ENCODE measurements at regions of chr1 and their contacts with region 1.

Region 1: DNA sequence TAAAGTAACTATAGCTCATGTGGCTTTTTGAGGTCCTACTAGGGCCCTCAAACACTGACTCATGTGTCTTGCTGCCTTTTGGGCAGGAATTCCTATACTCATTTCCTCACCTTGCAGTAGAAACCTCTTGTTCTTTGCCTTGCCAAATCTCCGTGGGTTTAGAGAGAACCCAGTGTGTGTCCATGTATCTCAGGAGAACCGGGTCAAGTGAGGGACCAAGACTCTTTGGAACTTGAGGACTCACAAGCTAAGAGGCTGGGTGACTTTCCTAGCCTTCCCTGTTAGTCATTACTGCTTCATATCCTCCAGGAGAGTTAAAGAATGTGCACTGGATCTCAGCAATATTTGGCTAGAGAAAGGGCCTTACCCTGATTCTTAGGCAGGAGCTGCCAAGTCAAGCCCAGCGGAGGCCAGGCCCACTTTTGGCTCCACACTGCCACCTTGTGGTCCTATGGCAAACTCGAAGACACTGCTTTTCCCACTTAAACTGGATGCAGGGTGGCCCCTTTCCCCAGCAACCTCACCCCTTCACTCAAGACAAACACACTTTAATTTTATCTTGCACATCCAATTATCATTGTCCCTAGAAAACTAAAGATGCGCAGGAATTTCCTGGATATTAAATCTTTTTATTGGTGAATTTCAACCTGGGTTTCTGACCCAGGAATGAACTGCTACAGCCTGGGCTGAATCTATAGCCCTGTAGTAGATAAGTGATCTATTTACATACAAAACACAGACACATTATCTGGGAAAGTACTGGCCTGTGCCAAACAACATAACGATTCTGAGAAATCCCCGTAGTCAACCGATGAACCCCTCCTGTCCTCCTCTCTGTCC is 10.6 kb downstream of the AVPR1B start:
- DNase-seq: peak; percentile 96
- H3K4me3 Mint-ChIP-seq: no peak overlapping the region
- H3K27ac Mint-ChIP-seq: no peak overlapping the region
- H3K4me1 Mint-ChIP-seq: peaks cover 9% of the 10 kb centered on the region
- H3K27me3 Mint-ChIP-seq: peaks cover 5% of the 10 kb centered on the region
- CTCF ChIP-seq: peak; percentile 99

Region 2: DNA sequence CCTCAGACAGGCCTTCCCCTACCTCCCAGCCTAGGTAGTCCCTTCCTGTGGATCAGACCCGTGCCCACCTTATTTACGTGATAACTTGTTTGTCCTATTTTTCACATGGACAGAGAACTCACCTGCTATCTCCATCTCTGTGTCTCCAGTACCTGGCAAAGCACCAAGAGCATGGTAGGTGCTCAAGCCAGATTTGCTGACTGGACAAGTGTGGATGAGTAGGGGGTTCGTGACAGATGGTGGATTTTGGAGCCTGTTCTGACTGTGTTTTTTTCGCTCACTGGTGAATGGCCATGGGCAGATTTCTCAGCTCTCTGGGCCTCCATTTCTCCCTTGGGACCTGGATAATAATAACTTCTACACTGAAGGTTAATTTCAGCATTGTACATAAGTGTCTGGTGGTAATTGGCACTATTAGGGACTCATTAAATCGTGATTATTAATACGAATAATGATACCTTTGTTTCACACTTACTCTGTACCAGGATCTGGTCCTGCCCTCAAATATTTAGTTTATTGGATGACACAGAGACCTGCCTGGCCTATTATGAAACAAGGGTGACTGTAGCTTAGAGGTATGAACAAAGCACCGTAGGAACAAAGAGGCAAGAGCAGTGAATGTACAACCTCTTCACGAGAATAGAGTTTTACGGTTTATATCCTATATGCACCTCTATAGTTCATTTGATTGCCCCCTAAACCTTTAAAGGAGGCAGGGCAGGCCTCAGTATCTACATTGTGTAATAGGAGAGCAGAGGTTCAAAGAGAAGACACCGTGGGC is 138.8 kb before region 1 on chr1:
- CTCF ChIA-PET with region 1: interaction called, 15 read pairs
- POLR2A ChIA-PET with region 1: interaction called, 3 read pairs
- intact Hi-C with region 1: no loop called
- DNase-seq: peak; percentile 67
- H3K4me3 Mint-ChIP-seq: no peak overlapping the region
- H3K27ac Mint-ChIP-seq: no peak overlapping the region
- H3K4me1 Mint-ChIP-seq: peaks cover 29% of the 10 kb centered on the region
- H3K27me3 Mint-ChIP-seq: peaks cover 5% of the 10 kb centered on the region
- CTCF ChIP-seq: no peak

Region 3: GRCh38 chr1:205994346-205994745 is 112.2 kb before region 1 on chr1:
- CTCF ChIA-PET with region 1: interaction called, 56 read pairs
- POLR2A ChIA-PET with region 1: interaction called, 3 read pairs
- intact Hi-C with region 1: no loop called
- DNase-seq: no peak
- H3K4me3 Mint-ChIP-seq: no peak overlapping the region
- H3K27ac Mint-ChIP-seq: no peak overlapping the region
- H3K4me1 Mint-ChIP-seq: peaks cover 8% of the 10 kb centered on the region
- H3K27me3 Mint-ChIP-seq: no peaks in the 10 kb centered on the region
- CTCF ChIP-seq: no peak

Region 4: GRCh38 chr1:206030714-206031113 is 75.8 kb before region 1 on chr1:
- CTCF ChIA-PET with region 1: interaction called, 244 read pairs
- POLR2A ChIA-PET with region 1: interaction called, 68 read pairs
- intact Hi-C with region 1: loop called (anchors 1 kb)
- DNase-seq: peak; percentile 95
- H3K4me3 Mint-ChIP-seq: no peak overlapping the region
- H3K27ac Mint-ChIP-seq: no peak overlapping the region
- H3K4me1 Mint-ChIP-seq: peaks cover 32% of the 10 kb centered on the region
- H3K27me3 Mint-ChIP-seq: peaks cover 11% of the 10 kb centered on the region
- CTCF ChIP-seq: peak; percentile 95

Region 5: GRCh38 chr1:206080026-206080820 is 26.3 kb before region 1 on chr1:
- CTCF ChIA-PET with region 1: interaction called, 15 read pairs
- POLR2A ChIA-PET with region 1: interaction called, 3 read pairs
- intact Hi-C with region 1: no loop called
- DNase-seq: no peak
- H3K4me3 Mint-ChIP-seq: no peak overlapping the region
- H3K27ac Mint-ChIP-seq: no peak overlapping the region
- H3K4me1 Mint-ChIP-seq: peaks cover 5% of the 10 kb centered on the region
- H3K27me3 Mint-ChIP-seq: peaks cover 6% of the 10 kb centered on the region
- CTCF ChIP-seq: no peak

Region 6: DNA sequence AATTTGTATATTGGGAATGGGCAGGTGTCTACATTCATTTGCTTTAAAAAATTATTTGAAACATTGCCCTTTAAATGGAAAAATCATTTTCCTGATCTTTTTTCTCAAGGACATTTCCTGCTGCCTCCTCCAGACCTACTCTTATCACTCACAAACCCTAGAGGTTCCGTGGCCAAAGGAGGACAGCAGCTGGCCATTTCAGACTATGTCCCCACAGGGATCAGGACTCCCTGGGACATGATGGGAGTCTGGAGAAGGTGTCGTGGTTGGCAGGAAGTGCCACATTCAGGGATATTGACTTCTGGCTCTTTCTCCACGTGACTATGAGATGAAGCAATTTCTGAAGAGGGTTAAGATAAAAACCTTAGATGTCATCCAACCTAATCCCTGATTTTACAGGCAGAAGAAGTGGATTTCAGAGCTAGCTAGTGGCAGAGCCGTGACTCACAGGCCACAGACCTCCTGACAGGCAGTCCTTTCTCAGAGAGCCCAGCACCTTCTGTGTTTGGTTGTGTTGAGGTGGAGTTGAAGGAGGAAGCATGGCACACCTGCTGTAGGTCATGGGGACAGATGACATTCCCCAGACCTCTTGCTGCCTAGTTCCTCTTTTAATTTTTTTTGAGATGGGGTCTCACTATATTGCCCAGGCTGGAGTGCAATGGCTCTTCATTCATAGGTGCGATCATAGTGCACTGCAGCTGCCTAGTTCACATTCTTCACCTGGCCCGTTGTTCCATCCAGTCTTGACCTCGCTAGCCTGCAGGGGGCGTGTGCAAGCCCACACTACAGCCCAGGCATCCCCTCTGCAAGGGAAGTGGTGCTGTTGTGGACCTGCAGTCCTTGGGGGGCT is 691.2 kb after region 1 on chr1:
- CTCF ChIA-PET with region 1: no interaction called
- POLR2A ChIA-PET with region 1: no interaction called
- intact Hi-C with region 1: no loop called
- DNase-seq: peak; percentile 50
- H3K4me3 Mint-ChIP-seq: no peak overlapping the region
- H3K27ac Mint-ChIP-seq: no peak overlapping the region
- H3K4me1 Mint-ChIP-seq: no peaks in the 10 kb centered on the region
- H3K27me3 Mint-ChIP-seq: no peaks in the 10 kb centered on the region
- CTCF ChIP-seq: peak; percentile 68